Aorta (tissue), 5 donors: ENCODE measurements at regions of chr7 and their contacts with region 1.

Region 1: GRCh38 chr7:26365077-26365900 is 73.6 kb downstream of the SNX10 start:
- DNase-seq: no peak
- ATAC-seq: peak; percentile 73
- H3K4me3 ChIP-seq: no peak overlapping the region
- H3K27ac ChIP-seq: no peak overlapping the region
- H3K4me1 ChIP-seq: no peaks in the 10 kb centered on the region
- H3K27me3 ChIP-seq: no peaks in the 10 kb centered on the region

Region 2: GRCh38 chr7:25862260-25863037 is 502.8 kb before region 1 on chr7:
- intact Hi-C with region 1: loop called in 1 of 2 experiments (anchors 10 kb)
- DNase-seq: peak; percentile 95 to 100
- ATAC-seq: peak; percentile 97
- H3K4me3 ChIP-seq: no peak overlapping the region
- H3K27ac ChIP-seq: no peak overlapping the region
- H3K4me1 ChIP-seq: no peaks in the 10 kb centered on the region
- H3K27me3 ChIP-seq: peaks cover 0 to 4% of the 10 kb centered on the region in 2 donors

Region 3: DNA sequence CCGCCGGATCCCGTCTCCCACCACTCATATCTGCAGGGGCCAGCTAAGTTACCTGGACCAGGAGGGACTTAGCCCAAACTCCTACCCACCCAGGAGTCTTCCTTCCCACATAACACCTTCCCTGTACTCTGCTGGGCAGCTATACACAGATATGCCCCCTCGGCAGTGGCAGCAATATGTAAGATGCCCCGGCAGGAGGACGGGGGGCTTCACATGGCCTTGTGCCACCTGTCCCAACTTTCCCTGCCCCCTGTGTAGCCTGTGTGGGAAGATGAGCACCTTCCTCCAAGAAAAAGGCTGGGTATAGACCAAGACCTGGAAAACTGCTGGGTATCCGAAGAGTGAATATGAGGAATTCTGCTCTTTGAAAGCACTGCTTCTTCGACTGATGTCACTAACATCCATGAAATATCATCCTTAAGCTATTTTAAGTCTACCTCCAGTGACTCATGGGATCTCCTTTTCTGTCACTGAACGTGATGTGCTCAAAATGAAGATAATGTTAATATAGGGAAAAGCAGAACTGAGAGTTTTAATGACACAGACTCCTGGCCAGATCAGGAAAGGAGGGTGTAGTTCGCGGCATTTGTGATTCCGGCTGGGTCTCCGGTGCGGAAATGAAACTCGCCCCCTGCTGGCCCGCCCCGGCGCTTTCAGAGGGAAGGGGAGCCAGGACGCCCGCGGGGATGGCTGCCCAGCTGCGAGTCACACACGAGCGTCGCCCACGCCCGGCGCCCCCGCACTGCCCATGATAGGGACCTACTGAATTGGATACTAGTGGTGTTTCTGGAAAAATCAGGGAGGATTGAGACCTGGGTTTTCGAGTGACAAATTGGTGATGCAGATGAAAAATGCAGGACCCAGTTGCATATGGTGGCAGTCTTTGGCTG is 470.1 kb before region 1 on chr7:
- intact Hi-C with region 1: loop called (anchors 1 to 2 kb)
- DNase-seq: peak; percentile 76 to 93
- ATAC-seq: peak; percentile 73
- H3K4me3 ChIP-seq: no peak overlapping the region
- H3K27ac ChIP-seq: no peak overlapping the region
- H3K4me1 ChIP-seq: no peaks in the 10 kb centered on the region
- H3K27me3 ChIP-seq: peaks cover 0 to 3% of the 10 kb centered on the region in 2 donors

Region 4: DNA sequence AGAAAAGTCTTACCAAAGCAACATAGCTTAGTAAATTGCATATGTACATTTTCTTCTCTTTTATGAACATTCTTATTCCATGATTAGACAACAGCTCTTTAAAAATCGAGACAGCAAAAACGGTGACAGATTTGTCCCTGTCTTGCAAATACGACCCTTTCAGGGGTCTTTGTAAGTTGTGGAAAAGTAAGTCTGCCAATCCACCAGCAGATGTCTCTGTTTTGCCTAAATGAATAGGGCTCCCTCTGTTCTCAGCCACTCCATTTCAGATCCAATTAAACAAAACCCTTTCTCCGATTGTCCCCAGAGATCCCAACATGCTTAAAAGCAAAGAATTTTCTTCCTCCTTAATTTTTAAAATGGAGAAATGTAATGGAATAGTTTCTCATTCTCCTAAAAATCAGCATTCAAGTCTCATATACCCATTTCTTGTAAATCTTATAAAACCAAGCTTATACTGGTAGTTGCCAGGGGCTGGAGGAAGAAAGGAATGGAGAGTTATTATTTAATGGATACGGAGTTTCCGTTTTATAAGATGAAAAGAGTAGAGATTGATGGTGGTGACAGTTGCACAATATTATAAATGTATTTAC is 274.3 kb before region 1 on chr7:
- intact Hi-C with region 1: loop called (anchors 2 to 5 kb)
- DNase-seq: no peak
- ATAC-seq: no peak
- H3K4me3 ChIP-seq: no peak overlapping the region
- H3K27ac ChIP-seq: no peak overlapping the region
- H3K4me1 ChIP-seq: no peaks in the 10 kb centered on the region
- H3K27me3 ChIP-seq: peaks cover 0 to 3% of the 10 kb centered on the region in 2 donors

Region 5: GRCh38 chr7:26413012-26413691 is 47.9 kb after region 1 on chr7:
- intact Hi-C with region 1: no loop called
- DNase-seq: no peak
- ATAC-seq: no peak
- H3K4me3 ChIP-seq: no peak overlapping the region
- H3K27ac ChIP-seq: no peak overlapping the region
- H3K4me1 ChIP-seq: no peaks in the 10 kb centered on the region
- H3K27me3 ChIP-seq: no peaks in the 10 kb centered on the region

Region 6: DNA sequence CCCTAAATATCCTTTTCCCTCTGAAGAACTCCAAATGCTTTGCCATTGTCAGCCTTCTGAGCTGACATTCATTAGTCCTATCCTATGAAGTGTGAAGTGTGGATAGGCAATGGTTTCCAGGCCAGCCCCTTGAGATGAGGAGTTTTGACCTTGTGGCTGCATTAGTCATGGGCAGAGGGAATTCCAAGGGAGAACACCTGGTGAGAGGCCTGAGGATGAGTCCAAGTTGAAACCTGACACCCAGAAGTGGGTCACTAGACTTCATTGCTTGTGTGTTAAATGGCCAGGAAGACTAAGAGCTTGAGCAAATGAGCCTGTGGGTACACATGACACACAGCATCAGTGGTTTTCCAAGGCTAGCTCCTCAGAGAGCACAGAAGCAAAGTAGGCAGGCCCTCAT is 238.3 kb after region 1 on chr7:
- intact Hi-C with region 1: no loop called
- DNase-seq: no peak
- ATAC-seq: no peak
- H3K4me3 ChIP-seq: no peak overlapping the region
- H3K27ac ChIP-seq: no peak overlapping the region
- H3K4me1 ChIP-seq: no peaks in the 10 kb centered on the region
- H3K27me3 ChIP-seq: no peaks in the 10 kb centered on the region

Region 7: DNA sequence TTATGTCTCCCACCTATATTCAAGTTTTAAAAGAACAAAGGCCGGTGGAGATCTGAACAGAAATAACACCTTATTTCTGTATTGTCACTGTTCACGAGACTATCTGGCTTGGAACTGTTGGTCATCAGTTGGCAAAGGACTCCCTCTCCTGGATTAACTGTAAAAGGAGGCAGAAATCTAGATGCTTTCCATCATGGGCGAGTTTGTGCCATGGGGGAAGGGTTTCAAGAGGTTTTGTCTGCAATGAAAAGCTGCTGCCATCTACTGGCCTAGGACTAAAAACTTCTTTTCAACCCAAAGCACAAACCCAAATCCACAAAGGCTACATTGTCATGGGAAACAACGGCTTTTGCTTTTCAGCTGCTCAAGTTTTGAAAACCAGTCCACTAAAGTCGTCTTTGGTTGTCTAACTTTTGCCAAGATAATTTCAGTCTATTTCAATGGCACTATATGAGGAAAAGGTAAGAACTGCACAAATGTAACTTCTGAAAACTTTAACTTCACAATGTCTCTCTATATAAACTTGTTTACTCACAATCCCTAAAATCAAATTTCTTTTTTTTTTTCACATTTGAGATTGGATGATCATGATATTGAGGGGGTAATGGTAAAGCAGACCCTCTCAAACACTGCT is 302.3 kb after region 1 on chr7:
- intact Hi-C with region 1: loop called (anchors 5 kb)
- DNase-seq: peak in 1 of 2 donors; percentile 48
- ATAC-seq: peak; percentile 67
- H3K4me3 ChIP-seq: no peak overlapping the region
- H3K27ac ChIP-seq: no peak overlapping the region
- H3K4me1 ChIP-seq: no peaks in the 10 kb centered on the region
- H3K27me3 ChIP-seq: no peaks in the 10 kb centered on the region